H1 (cell line): ENCODE measurements at regions of chr11 and their contacts with region 1.

Region 1: GRCh38 chr11:119728651-119729580 is at the start of gene NECTIN1:
- DNase-seq: peak; percentile 71 to 98
- H3K4me3 ChIP-seq: peak within 1 kb of the TSS; percentile 82 to 97 (median 92)
- H3K27ac ChIP-seq: peak within 1 kb of the TSS; percentile 38; the same call in 1 of the 2 replicates
- H3K4me1 ChIP-seq: peaks cover 14 to 29% (median 22%) of the 10 kb centered on the region in 4 experiments
- H3K27me3 ChIP-seq: no peaks in the 10 kb centered on the region; a peak in 2 of 7 replicates
- CTCF ChIP-seq: peak; percentile 73 to 90 (median 88)
- EP300 ChIP-seq: 0 out of 3 replicates have a peak, but pooled peaks of 1 of the 2 experiments have one; percentile 8
- POLR2A ChIP-seq: peak in 1 of 2 experiments; percentile 52; a peak in 1 of 3 replicates
- RAD21 ChIP-seq: peak; percentile 80 to 91
- total RNA-seq, gene NECTIN1: 97.6 and 97.7 TPM in 2 replicates

Region 2: GRCh38 chr11:119525180-119525866 is 203.6 kb before region 1 on chr11:
- CTCF ChIA-PET with region 1: no interaction called
- POLR2A ChIA-PET with region 1: no interaction called
- DNase-seq: no peak
- H3K4me3 ChIP-seq: no peak overlapping the region
- H3K27ac ChIP-seq: no peak overlapping the region
- H3K4me1 ChIP-seq: no peaks in the 10 kb centered on the region; a peak in 1 of 7 replicates
- H3K27me3 ChIP-seq: no peaks in the 10 kb centered on the region
- CTCF ChIP-seq: no peak
- EP300 ChIP-seq: no peak
- POLR2A ChIP-seq: no peak
- RAD21 ChIP-seq: no peak

Region 3: GRCh38 chr11:119666463-119667131 is 62.3 kb before region 1 on chr11:
- CTCF ChIA-PET with region 1: interaction called, 16 read pairs
- POLR2A ChIA-PET with region 1: no interaction called
- DNase-seq: peak; percentile 69 to 92
- H3K4me3 ChIP-seq: no peak overlapping the region
- H3K27ac ChIP-seq: no peak overlapping the region
- H3K4me1 ChIP-seq: peaks cover 2 to 19% (median 15%) of the 10 kb centered on the region in 4 experiments; a peak in 6 of 7 replicates
- H3K27me3 ChIP-seq: no peaks in the 10 kb centered on the region
- CTCF ChIP-seq: peak; percentile 92 to 99 (median 96)
- EP300 ChIP-seq: no peak
- POLR2A ChIP-seq: no peak
- RAD21 ChIP-seq: peak; percentile 99

Region 4: DNA sequence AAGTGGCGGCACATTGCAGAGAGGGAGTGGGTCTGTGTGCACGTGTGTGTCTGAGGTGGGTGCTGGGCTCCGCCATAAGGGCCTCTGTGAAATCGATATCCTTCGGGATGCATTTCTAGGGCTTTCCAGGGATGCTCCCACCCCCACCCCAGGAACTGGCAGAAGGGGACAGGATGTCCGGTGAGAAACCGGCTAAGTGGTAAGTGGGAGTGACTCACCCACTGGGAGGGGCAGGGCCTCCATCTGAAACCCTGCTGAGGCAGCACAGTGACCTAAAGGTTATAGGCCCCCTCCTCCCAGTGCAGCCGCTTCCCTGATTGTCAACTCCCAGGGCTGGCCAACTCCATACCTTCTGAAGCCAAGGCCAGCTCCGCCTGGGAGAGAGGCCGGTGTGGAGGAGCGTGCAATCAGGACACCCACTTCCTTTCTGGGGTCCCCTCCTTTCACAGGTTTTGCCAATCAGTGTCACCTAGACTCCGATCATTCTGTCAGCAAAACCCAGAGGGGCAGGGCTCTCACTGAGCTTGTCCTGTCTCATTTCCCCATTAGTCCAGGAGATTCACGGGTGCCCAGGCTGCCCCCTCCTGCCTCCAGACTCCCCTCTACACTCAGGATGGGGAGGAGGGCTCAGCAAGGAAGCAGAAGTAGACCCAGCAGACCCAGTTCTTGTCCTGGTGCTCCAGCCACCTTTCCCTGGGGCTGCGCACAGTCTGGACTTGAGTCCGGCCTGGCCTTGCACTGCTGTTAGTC is 44.4 kb before region 1 on chr11:
- CTCF ChIA-PET with region 1: interaction called, 14 read pairs
- POLR2A ChIA-PET with region 1: interaction called, 3 read pairs
- DNase-seq: no peak
- H3K4me3 ChIP-seq: no peak overlapping the region
- H3K27ac ChIP-seq: no peak overlapping the region
- H3K4me1 ChIP-seq: peaks cover 9 to 45% (median 32%) of the 10 kb centered on the region in 4 experiments
- H3K27me3 ChIP-seq: no peaks in the 10 kb centered on the region
- CTCF ChIP-seq: no peak
- EP300 ChIP-seq: no peak
- POLR2A ChIP-seq: no peak
- RAD21 ChIP-seq: no peak

Region 5: DNA sequence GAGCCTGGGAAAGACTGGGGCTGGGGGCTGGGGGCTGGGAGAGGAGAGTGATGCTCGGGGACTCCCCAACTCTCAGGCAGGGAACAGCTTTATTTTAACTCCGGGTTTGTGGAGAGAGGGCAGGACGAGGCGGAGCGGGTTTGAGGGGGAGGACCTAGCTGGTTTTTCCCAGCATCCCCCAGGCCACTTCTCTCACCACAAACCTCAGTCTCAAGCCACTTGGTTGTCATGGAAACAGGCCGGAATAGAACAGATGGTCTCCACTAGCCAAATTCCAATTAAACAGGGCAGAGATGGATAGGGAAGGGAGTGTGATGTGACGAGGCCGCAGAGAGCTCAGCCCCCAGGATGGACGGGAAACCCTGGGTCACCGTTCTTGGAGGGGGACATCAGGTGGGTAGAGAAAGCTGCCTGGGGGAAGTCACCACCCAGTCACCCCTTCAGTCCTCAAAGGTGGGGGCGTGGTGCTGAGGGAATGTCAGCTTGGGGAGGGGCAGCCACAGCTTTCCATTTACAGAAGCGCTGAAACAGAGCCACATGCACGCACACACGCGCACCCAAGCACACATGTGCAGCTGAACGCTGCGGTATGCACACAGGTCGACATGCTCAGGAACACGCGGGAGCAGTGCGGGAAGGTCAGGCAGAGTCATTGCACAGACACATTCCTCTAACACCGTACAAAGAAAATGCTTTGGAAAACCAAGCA is 19.1 kb before region 1 on chr11:
- CTCF ChIA-PET with region 1: interaction called, 171 read pairs
- POLR2A ChIA-PET with region 1: interaction called, 10 read pairs
- DNase-seq: no peak
- H3K4me3 ChIP-seq: no peak overlapping the region
- H3K27ac ChIP-seq: no peak overlapping the region
- H3K4me1 ChIP-seq: peaks cover 0 to 33% (median 13%) of the 10 kb centered on the region in 4 experiments; a peak in 6 of 7 replicates
- H3K27me3 ChIP-seq: no peaks in the 10 kb centered on the region
- CTCF ChIP-seq: no peak
- EP300 ChIP-seq: no peak
- POLR2A ChIP-seq: no peak
- RAD21 ChIP-seq: no peak

Region 6: GRCh38 chr11:119759324-119759723 is 30.4 kb after region 1 on chr11:
- CTCF ChIA-PET with region 1: interaction called, 15 read pairs
- POLR2A ChIA-PET with region 1: interaction called, 3 read pairs
- DNase-seq: no peak
- H3K4me3 ChIP-seq: no peak overlapping the region
- H3K27ac ChIP-seq: no peak overlapping the region
- H3K4me1 ChIP-seq: peaks cover 0 to 3% (median under 1%) of the 10 kb centered on the region in 4 experiments; a peak in 4 of 7 replicates
- H3K27me3 ChIP-seq: peaks cover 0 to 4% (median 0%) of the 10 kb centered on the region in 4 experiments; a peak in 2 of 7 replicates
- CTCF ChIP-seq: no peak
- EP300 ChIP-seq: no peak
- POLR2A ChIP-seq: no peak
- RAD21 ChIP-seq: no peak